ENCODE measurements at regions of chr17 and their contacts with region 1.

Region 1: GRCh38 chr17:32519228-32520103 is 32.7 kb downstream of the CDK5R1 start:
- DNase-seq: peak; percentile 65
- ATAC-seq: peak; percentile 9
- H3K4me3 Mint-ChIP-seq: peak overlapping the region; percentile 81
- H3K27ac Mint-ChIP-seq: peak overlapping the region; percentile 87
- H3K4me1 Mint-ChIP-seq: peaks cover 73% of the 10 kb centered on the region
- H3K27me3 Mint-ChIP-seq: no peaks in the 10 kb centered on the region

Region 2: DNA sequence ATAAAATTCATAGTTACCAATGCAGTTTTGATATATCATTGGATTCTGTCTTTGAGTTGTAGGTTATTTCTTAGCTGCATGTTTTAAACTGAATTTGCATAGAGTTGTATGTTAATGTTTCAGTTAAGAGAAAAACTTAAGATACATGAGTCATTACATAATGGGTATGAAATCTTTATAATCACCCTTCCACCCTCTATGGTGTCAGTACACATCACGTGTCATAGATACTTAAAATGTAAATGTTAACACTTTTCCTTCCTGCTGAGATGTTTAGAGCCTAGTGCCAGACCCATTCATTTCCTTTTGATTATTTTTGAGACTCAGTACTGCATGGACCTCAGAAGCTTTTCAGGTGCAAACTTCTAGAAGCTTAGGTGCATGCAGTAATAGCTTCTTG is 149.0 kb before region 1 on chr17:
- POLR2A ChIA-PET with region 1: no interaction called
- DNase-seq: no peak
- ATAC-seq: no peak
- H3K4me3 Mint-ChIP-seq: no peak overlapping the region
- H3K27ac Mint-ChIP-seq: no peak overlapping the region
- H3K4me1 Mint-ChIP-seq: peaks cover 12% of the 10 kb centered on the region
- H3K27me3 Mint-ChIP-seq: no peaks in the 10 kb centered on the region

Region 3: GRCh38 chr17:32470405-32471167 is 48.9 kb before region 1 on chr17:
- POLR2A ChIA-PET with region 1: no interaction called
- DNase-seq: no peak
- ATAC-seq: no peak
- H3K4me3 Mint-ChIP-seq: no peak overlapping the region
- H3K27ac Mint-ChIP-seq: no peak overlapping the region
- H3K4me1 Mint-ChIP-seq: peaks cover 2% of the 10 kb centered on the region
- H3K27me3 Mint-ChIP-seq: no peaks in the 10 kb centered on the region

Region 4: GRCh38 chr17:32486111-32486700 is 33.3 kb before region 1 on chr17:
- POLR2A ChIA-PET with region 1: interaction called, 60 read pairs
- DNase-seq: peak; percentile 83
- ATAC-seq: peak; percentile 66
- H3K4me3 Mint-ChIP-seq: peak overlapping the region; percentile 55
- H3K27ac Mint-ChIP-seq: peak overlapping the region; percentile 39
- H3K4me1 Mint-ChIP-seq: peaks cover 34% of the 10 kb centered on the region
- H3K27me3 Mint-ChIP-seq: no peaks in the 10 kb centered on the region

Region 5: DNA sequence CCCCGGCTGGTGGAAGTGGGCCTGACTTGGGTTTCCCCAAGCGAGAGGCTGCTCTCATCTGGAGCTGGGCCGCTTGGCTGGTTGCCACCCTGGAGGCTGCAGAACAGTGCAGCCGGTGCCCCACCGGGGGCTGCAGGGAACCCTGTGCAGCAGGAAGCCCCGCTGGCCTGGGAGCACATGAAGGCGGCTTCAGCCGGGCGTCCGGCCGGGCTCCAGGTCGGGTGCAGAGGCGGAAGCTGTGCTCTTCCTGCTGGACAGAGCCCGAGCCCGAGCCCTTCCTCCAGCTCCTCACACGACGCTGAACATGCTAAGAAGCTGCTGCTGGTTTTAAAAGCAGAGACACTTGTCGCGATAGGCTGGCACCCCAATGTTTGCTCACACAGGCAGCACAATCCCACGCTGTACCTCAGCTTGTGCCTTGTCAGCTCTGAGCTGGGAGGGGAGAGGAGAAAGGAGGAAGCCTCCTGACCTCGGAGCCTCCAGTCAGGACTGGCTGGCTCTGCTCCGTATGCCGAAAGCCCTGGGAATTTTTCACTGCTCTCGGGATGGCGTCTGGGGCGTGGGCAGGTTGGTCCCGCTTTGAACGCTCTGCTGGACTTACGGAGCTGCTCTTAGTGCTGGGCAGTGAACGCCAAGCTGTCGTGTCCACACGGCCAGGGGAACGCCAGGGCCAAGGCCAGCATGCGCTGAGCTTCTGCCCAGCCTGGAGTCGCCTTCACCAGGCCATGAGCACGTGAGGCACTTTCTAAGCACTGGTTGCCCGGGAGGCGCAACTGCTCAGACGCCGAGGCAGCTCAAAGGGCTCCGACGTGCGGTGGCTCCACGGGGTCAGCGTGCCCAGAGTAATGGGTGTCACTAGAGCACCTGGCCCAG is 23.9 kb before region 1 on chr17:
- POLR2A ChIA-PET with region 1: interaction called, 22 read pairs
- DNase-seq: peak; percentile 50
- ATAC-seq: peak; percentile 13
- H3K4me3 Mint-ChIP-seq: peak overlapping the region; percentile 61
- H3K27ac Mint-ChIP-seq: peak overlapping the region; percentile 16
- H3K4me1 Mint-ChIP-seq: peaks cover 30% of the 10 kb centered on the region
- H3K27me3 Mint-ChIP-seq: no peaks in the 10 kb centered on the region

Region 6: GRCh38 chr17:32503251-32504165 is 16.0 kb before region 1 on chr17:
- POLR2A ChIA-PET with region 1: interaction called, 16 read pairs
- DNase-seq: peak; percentile 57
- ATAC-seq: peak; percentile 98
- H3K4me3 Mint-ChIP-seq: peak overlapping the region; percentile 39
- H3K27ac Mint-ChIP-seq: peak overlapping the region; percentile 99
- H3K4me1 Mint-ChIP-seq: peaks cover 37% of the 10 kb centered on the region
- H3K27me3 Mint-ChIP-seq: no peaks in the 10 kb centered on the region

Region 7: GRCh38 chr17:32567511-32567910 is 48.0 kb after region 1 on chr17:
- POLR2A ChIA-PET with region 1: no interaction called
- DNase-seq: no peak
- ATAC-seq: no peak
- H3K4me3 Mint-ChIP-seq: no peak overlapping the region
- H3K27ac Mint-ChIP-seq: no peak overlapping the region
- H3K4me1 Mint-ChIP-seq: peaks cover 22% of the 10 kb centered on the region
- H3K27me3 Mint-ChIP-seq: no peaks in the 10 kb centered on the region

Region 8: DNA sequence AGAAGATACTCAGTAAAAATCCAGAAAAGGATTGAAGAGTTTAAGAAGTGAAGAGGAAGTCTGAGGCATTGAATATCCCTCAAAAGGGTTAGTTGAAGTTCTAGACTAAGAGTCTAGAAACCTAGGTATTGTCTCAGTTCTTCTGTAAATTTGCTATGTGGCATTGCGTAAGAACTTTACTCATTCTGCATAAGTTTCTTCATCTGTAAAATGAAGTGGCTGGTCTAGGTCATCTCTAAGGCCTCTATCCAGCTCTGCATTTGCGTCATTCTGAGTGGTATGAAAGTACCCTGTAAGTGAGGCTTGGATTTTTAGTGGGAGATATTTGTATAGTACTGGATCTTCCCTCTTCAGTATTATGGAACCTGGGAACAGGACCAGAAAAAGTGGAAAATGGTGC is 227.2 kb after region 1 on chr17:
- POLR2A ChIA-PET with region 1: no interaction called
- DNase-seq: no peak
- ATAC-seq: no peak
- H3K4me3 Mint-ChIP-seq: no peak overlapping the region
- H3K27ac Mint-ChIP-seq: no peak overlapping the region
- H3K4me1 Mint-ChIP-seq: peaks cover 1% of the 10 kb centered on the region
- H3K27me3 Mint-ChIP-seq: no peaks in the 10 kb centered on the region